OCI-LY7 (cell line): ENCODE measurements at regions of chr14 and their contacts with region 1.

Region 1: DNA sequence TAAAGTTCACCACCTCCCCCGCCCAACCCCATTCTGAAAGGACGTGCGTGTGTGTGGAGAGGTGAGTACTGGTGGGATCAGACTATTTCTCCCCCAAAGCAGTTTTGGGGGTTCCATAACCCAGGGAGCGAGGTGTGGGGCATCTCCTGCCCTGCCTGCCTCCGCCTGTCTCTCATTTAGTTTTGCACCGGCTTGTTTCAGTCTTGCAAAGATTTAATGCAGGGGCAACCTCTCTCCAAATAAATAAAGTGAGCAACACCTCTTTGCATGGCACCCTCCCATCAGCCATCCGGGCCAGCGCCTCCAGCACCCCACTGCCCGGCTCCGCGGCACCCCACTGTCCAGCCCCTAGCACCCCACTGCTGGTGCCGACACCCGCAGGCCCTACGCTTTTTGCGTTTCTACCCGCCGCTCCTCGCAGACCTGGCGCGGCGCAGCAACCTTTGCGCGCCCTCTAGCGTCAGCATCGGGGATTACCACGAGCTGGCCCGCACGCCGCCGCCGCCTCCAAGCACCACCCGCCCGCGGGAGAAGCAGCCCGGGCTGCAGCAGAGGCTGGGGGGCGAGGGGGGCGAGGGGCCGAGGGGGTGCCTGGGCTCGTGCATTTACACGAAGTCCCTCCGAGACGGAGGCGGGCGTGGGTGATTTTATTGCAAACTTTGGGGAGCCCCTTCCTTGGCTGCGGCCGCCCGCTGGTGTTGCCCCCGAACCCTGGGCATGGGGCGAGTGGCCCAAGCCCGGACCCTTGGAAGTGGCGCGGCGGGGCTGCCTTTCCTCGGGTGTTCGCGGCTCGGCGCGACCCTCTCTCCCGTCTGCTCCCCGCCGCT is 55.8 kb upstream of the VRK1 start:
- DNase-seq: peak; percentile 59
- H3K4me3 ChIP-seq: peak overlapping the region; percentile 36
- H3K27ac ChIP-seq: no peak overlapping the region
- H3K4me1 ChIP-seq: no peaks in the 10 kb centered on the region
- CTCF ChIP-seq: peak; percentile 85

Region 2: GRCh38 chr14:96567289-96567899 is 174.0 kb before region 1 on chr14:
- CTCF ChIA-PET with region 1: no interaction called
- POLR2A ChIA-PET with region 1: no interaction called
- intact Hi-C with region 1: loop called (anchors 2 kb)
- DNase-seq: peak; percentile 36
- H3K4me3 ChIP-seq: no peak overlapping the region
- H3K27ac ChIP-seq: no peak overlapping the region
- H3K4me1 ChIP-seq: peaks cover 6% of the 10 kb centered on the region
- CTCF ChIP-seq: peak; percentile 89

Region 3: DNA sequence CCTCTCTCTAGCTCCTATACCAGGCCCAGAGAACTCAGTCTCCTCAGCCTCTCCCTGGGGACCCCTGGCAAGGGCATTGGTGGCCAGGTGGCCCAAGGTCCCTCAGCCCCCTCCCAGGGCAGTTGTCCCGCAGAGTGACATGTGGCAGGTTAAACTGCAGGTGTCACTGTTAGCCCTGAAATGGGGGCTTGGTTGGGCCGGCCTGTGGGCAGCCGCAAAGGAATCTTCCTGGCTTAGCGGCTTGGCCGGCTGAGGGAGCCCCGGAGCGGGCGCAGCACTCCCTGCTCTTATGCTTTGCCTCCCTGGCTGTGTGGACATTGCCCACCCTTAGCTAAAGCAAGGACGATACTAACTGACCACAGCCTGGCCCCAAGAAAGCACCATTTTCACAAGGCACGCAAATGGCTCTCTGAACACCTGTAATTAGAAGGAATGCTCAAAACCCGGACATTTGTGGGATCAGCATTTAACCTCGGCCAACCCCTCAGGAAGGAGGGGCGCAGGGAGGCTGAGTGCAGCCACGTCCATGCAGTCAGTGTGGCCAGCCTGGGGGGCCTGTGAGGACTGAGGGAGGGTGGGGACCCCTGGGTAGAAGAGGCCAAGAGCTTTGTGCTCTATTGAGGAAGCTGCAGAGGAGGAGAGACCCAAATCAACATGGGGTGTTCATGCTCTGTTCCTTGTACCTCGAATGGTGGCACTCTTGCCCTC is 157.0 kb before region 1 on chr14:
- CTCF ChIA-PET with region 1: no interaction called
- POLR2A ChIA-PET with region 1: no interaction called
- intact Hi-C with region 1: loop called (anchors 2 kb)
- DNase-seq: peak; percentile 52
- H3K4me3 ChIP-seq: no peak overlapping the region
- H3K27ac ChIP-seq: no peak overlapping the region
- H3K4me1 ChIP-seq: no peaks in the 10 kb centered on the region
- CTCF ChIP-seq: peak; percentile 71

Region 4: DNA sequence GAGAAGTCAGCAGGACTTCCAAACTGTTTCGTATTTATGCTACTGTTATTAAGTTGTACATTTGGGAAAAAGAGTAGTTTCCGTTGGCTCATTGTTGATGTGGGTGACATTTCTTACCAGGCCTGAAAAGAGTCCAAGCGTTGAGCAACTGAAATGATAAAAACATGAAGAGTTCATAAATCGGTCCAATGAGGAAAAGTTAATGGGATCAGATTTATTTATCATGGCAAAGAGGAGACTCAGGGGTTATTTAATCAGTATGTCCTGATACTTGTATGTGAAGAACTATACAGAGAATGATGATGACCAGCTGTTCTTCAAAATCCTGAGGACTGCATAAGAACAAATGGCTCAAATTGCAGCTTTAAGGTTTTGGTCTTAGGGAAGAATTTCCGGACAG is 63.5 kb after region 1 on chr14:
- CTCF ChIA-PET with region 1: no interaction called
- POLR2A ChIA-PET with region 1: no interaction called
- intact Hi-C with region 1: no loop called
- DNase-seq: no peak
- H3K4me3 ChIP-seq: no peak overlapping the region
- H3K27ac ChIP-seq: no peak overlapping the region
- H3K4me1 ChIP-seq: peaks cover 5% of the 10 kb centered on the region
- CTCF ChIP-seq: no peak